Mucosa of descending colon (tissue), 3 donors: ENCODE measurements at regions of chr2 and their contacts with region 1.

Region 1: GRCh38 chr2:222613715-222614331 is 42.1 kb downstream of the FARSB start:
- DNase-seq: no peak
- ATAC-seq: peak; percentile 73
- H3K4me3 ChIP-seq: no peak overlapping the region
- H3K4me1 ChIP-seq: no peaks in the 10 kb centered on the region
- CTCF ChIP-seq: peak; percentile 41

Region 2: DNA sequence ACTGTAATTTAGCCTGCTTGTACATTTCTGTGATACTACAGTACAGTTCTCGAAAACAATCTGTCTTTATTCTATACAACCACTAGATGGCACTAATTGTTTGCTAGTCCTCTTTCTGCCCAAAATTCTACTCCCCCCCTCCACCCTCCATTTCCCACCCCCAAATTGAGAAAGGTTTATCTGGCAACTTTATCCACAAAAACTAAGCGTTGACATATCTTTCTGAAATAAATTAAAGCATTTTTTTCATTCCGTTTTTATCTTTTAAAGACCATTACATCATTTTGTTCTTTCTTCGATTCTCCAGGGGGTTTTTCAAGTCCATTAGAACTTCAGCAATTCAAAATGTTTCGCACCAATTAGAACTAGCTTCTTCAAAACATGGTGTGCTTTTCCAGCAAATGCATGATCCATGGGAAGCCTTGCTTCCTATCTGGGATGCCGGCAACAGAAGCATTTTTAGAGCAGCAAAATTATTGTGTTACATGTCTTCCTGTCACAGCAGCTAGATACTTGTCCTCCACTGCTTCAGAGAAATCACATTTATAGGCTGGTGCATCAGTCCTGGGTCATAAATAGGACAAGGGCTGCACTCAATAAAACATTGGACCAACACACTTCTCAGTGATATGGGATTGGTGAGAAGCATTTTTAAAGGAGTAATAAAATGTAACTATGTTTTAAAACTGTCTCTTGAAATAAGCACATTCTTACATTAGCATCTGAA is 556.3 kb before region 1 on chr2:
- intact Hi-C with region 1: loop called (anchors 10 kb)
- DNase-seq: no peak
- ATAC-seq: no peak
- H3K4me3 ChIP-seq: no peak overlapping the region
- H3K4me1 ChIP-seq: no peaks in the 10 kb centered on the region
- CTCF ChIP-seq: no peak

Region 3: DNA sequence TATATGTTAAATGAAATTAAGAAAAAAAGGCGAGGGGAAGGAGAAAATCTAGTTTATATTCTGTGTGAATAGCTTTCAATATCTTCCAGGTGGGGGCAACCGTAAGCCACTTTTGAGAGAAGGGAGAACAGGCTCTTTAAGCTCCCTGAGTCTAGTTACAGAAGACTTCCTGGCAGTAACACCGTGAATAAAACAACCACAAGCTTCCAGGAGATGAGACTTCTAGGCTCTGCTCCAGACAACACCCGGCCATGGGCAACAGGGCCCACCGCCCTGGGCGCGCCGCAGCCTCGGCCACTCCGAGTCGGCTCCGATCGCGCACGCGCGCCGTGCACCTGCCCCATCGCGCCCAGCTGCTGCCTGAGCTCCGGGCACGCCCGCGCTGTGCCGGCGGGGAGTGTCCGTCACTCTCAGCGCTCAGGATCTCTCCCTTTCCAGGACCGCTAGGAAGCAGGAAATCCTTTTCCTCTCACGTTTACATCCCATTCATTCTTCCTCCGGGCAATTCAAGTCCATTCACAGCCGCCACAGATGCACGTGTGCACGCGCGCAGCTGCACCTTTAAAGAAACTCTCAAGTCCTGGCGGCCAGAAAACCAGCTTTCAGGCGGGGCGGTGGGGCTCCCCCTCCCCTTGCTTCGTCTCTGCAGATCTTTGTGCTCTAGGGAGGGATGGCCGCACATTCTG is 295.7 kb before region 1 on chr2:
- intact Hi-C with region 1: loop called in 1 of 2 experiments (anchors 10 kb)
- DNase-seq: peak; percentile 82 to 87 (median 83)
- ATAC-seq: peak; percentile 97
- H3K4me3 ChIP-seq: no peak overlapping the region
- H3K4me1 ChIP-seq: peaks cover 21% of the 10 kb centered on the region
- CTCF ChIP-seq: no peak

Region 4: GRCh38 chr2:222518570-222519381 is 95.0 kb before region 1 on chr2:
- intact Hi-C with region 1: no loop called
- DNase-seq: peak in 2 of 3 donors; percentile 67 to 78
- ATAC-seq: peak; percentile 95
- H3K4me3 ChIP-seq: no peak overlapping the region
- H3K4me1 ChIP-seq: peaks cover 21% of the 10 kb centered on the region
- CTCF ChIP-seq: no peak